Endothelial cell of umbilical vein (primary cell): ENCODE measurements at regions of chr14 and their contacts with region 1.

Region 1: DNA sequence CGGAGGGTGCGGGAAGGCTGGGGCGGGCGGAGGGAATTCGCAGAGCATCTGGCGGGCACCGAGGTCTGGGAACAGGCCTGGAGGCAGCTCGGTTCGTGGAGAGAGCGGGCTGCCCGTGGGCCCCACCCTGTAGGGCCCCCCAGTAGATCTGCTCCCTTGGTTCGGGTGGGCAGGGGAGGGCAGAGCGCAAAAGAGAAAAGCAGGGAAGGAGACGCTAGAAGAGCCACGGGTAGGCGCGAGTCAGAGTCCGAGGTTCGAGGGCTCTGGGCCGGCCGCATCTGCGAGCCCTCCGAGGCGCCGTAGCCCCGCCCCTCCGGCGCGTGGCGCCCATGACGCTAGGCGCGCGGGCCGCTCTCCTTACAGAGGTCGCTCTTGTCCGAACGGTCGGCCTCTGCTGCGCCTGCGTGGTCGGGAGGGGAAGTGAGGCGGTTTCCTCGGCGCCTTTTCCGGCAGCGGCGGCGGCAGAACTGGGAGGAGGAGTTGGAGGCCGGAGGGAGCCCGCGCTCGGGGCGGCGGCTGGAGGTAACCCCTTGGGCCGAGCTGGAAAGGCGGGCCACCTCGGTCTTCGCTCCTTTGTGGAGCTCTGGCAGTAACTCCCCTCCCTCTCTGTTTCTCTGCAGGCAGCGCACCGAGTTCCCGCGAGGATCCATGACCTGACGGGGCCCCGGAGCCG is at the start of gene ARF6:
- DNase-seq: peak; percentile 97
- H3K4me3 ChIP-seq: peak within 1 kb of the TSS; percentile 27 to 92 (median 70)
- H3K27ac ChIP-seq: peak within 1 kb of the TSS; percentile 98
- H3K4me1 ChIP-seq: peaks cover 31% of the 10 kb centered on the region
- H3K27me3 ChIP-seq: no peaks in the 10 kb centered on the region
- CTCF ChIP-seq: no peak
- POLR2A ChIP-seq: peak; percentile 91
- total RNA-seq, gene ARF6: 73.2 and 73.6 TPM in 2 replicates

Region 2: GRCh38 chr14:49634547-49635334 is 258.0 kb before region 1 on chr14 and contains the start of gene DNAAF2:
- CTCF ChIA-PET with region 1: no interaction called
- POLR2A ChIA-PET with region 1: no interaction called
- dilution Hi-C with region 1: no loop called
- intact Hi-C with region 1: no loop called
- DNase-seq: peak; percentile 80
- H3K4me3 ChIP-seq: peak within 1 kb of the TSS; percentile 5 to 98 (median 79)
- H3K27ac ChIP-seq: peak within 1 kb of the TSS; percentile 90
- H3K4me1 ChIP-seq: peaks cover 16% of the 10 kb centered on the region
- H3K27me3 ChIP-seq: no peaks in the 10 kb centered on the region
- CTCF ChIP-seq: no peak
- POLR2A ChIP-seq: peak; percentile 52
- total RNA-seq, gene DNAAF2: 5.7 and 6.4 TPM in 2 replicates

Region 3: DNA sequence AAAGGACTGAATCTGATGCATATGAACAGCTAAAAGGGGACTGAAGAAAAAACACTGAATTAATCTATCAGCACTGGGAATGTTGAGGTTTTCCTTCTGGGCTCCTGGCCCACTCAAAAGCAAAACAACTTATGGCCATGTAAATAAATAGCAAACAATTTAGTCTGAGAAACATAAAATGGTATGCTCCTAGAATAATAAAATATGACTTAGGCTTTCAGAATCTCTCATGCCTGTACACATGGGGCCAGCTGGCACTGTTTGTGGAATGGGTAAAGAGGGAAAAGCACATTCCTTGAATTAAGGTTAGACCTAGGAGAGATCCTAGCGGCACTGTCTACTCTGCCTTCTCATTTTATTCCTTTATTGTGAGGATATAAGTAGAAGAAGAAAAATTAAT is 118.7 kb before region 1 on chr14:
- CTCF ChIA-PET with region 1: no interaction called
- POLR2A ChIA-PET with region 1: no interaction called
- dilution Hi-C with region 1: no loop called
- intact Hi-C with region 1: no loop called
- DNase-seq: no peak
- H3K4me3 ChIP-seq: no peak overlapping the region
- H3K27ac ChIP-seq: no peak overlapping the region
- H3K4me1 ChIP-seq: peaks cover 6% of the 10 kb centered on the region
- H3K27me3 ChIP-seq: no peaks in the 10 kb centered on the region
- CTCF ChIP-seq: no peak
- POLR2A ChIP-seq: no peak

Region 4: GRCh38 chr14:49908432-49908781 is 15.6 kb after region 1 on chr14:
- CTCF ChIA-PET with region 1: interaction called, 7 read pairs
- POLR2A ChIA-PET with region 1: interaction called, 7 read pairs
- dilution Hi-C with region 1: no loop called
- intact Hi-C with region 1: loop called (anchors 2 kb)
- DNase-seq: no peak
- H3K4me3 ChIP-seq: no peak overlapping the region
- H3K27ac ChIP-seq: peak overlapping the region; percentile 96
- H3K4me1 ChIP-seq: peaks cover 36% of the 10 kb centered on the region
- H3K27me3 ChIP-seq: no peaks in the 10 kb centered on the region
- CTCF ChIP-seq: no peak
- POLR2A ChIP-seq: no peak

Region 5: GRCh38 chr14:49946320-49947141 is 53.8 kb after region 1 on chr14:
- CTCF ChIA-PET with region 1: no interaction called
- POLR2A ChIA-PET with region 1: no interaction called
- dilution Hi-C with region 1: no loop called
- intact Hi-C with region 1: loop called (anchors 1 kb)
- DNase-seq: peak; percentile 86
- H3K4me3 ChIP-seq: peak overlapping the region in 1 of 3 experiments; percentile 43
- H3K27ac ChIP-seq: peak overlapping the region; percentile 44
- H3K4me1 ChIP-seq: peaks cover 26% of the 10 kb centered on the region
- H3K27me3 ChIP-seq: no peaks in the 10 kb centered on the region
- CTCF ChIP-seq: no peak
- POLR2A ChIP-seq: no peak

Region 6: DNA sequence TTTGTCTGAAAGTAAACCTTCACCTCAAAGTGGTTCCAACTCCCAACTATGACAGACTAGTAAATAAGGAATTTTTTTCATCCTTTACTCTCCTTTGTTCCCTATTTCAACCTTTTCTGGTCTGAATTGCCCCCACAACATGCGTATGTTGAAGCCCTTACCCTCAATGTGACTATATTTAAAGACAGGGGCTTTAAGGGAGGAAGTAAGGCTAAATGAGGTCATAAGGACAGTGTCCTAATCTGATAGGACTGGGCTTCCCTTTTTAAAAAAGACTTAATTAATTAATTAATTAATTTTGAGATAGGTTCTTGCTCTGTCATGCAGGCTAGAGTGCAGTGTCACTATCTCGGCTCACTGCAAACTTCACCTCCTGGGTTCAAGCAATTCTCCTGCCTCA is 137.3 kb after region 1 on chr14:
- CTCF ChIA-PET with region 1: no interaction called
- POLR2A ChIA-PET with region 1: no interaction called
- dilution Hi-C with region 1: no loop called
- intact Hi-C with region 1: no loop called
- DNase-seq: no peak
- H3K4me3 ChIP-seq: no peak overlapping the region
- H3K27ac ChIP-seq: no peak overlapping the region
- H3K4me1 ChIP-seq: no peaks in the 10 kb centered on the region
- H3K27me3 ChIP-seq: no peaks in the 10 kb centered on the region
- CTCF ChIP-seq: no peak
- POLR2A ChIP-seq: no peak

Region 7: DNA sequence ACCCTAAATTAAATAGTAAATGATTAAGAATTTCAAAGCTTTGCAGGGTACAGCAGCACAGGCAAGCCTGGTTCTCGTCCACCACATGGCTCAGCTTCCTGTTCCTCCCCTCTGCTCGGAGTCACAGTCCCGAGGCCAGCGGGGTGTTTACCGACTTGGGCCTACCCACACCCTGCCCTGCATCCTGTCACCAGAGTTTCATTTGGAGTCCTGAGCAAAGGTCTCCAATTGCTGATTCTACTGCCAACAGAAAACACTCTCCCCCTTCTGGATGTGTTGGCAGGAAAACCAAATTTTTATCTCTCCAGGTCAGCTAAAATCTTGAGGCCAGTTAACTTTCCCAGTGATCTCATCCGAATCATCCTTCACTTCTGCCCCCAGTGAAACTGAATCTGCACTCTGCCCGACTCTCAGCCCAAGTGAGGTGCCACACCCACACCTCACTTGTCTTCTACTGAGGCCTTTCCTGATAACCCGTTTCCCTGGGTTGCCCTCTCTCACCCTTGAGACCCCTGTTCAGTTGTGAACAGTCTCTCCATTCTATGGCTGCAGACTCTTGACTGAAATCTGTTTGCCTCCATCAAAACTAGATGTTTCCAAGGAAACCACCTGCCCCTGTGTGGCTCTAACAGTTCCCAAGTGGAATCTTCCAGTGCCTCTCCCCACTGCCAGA is 152.4 kb after region 1 on chr14:
- CTCF ChIA-PET with region 1: no interaction called
- POLR2A ChIA-PET with region 1: no interaction called
- dilution Hi-C with region 1: no loop called
- intact Hi-C with region 1: loop called (anchors 1 kb)
- DNase-seq: peak; percentile 69
- H3K4me3 ChIP-seq: no peak overlapping the region
- H3K27ac ChIP-seq: no peak overlapping the region
- H3K4me1 ChIP-seq: peaks cover 35% of the 10 kb centered on the region
- H3K27me3 ChIP-seq: no peaks in the 10 kb centered on the region
- CTCF ChIP-seq: no peak
- POLR2A ChIP-seq: no peak

Region 8: GRCh38 chr14:50116181-50116956 is 223.6 kb after region 1 on chr14 and contains the start of gene VCPKMT:
- CTCF ChIA-PET with region 1: no interaction called
- POLR2A ChIA-PET with region 1: no interaction called
- dilution Hi-C with region 1: no loop called
- intact Hi-C with region 1: no loop called
- DNase-seq: peak; percentile 95
- H3K4me3 ChIP-seq: peak within 1 kb of the TSS; percentile 72 to 99 (median 78)
- H3K27ac ChIP-seq: peak within 1 kb of the TSS; percentile 73
- H3K4me1 ChIP-seq: peaks cover 17% of the 10 kb centered on the region
- H3K27me3 ChIP-seq: no peaks in the 10 kb centered on the region
- CTCF ChIP-seq: no peak
- POLR2A ChIP-seq: peak; percentile 93
- total RNA-seq, gene VCPKMT: 6.9 and 9.2 TPM in 2 replicates